Ascending aorta (tissue), 2 donors: ENCODE measurements at regions of chr6 and their contacts with region 1.

Region 1: GRCh38 chr6:84220809-84221409 is 6.5 kb downstream of the CEP162 start:
- DNase-seq: no peak
- H3K4me3 ChIP-seq: no peak overlapping the region
- H3K27ac ChIP-seq: no peak overlapping the region
- H3K4me1 ChIP-seq: no peaks in the 10 kb centered on the region
- H3K27me3 ChIP-seq: no peaks in the 10 kb centered on the region
- CTCF ChIP-seq: peak; percentile 19 to 65 (median 51)

Region 2: GRCh38 chr6:83615025-83615999 is 605.6 kb before region 1 on chr6:
- intact Hi-C with region 1: loop called (anchors 5 kb)
- DNase-seq: no peak
- H3K4me3 ChIP-seq: no peak overlapping the region
- H3K27ac ChIP-seq: no peak overlapping the region
- H3K4me1 ChIP-seq: no peaks in the 10 kb centered on the region
- H3K27me3 ChIP-seq: no peaks in the 10 kb centered on the region
- CTCF ChIP-seq: peak; percentile 3 to 59 (median 54)

Region 3: DNA sequence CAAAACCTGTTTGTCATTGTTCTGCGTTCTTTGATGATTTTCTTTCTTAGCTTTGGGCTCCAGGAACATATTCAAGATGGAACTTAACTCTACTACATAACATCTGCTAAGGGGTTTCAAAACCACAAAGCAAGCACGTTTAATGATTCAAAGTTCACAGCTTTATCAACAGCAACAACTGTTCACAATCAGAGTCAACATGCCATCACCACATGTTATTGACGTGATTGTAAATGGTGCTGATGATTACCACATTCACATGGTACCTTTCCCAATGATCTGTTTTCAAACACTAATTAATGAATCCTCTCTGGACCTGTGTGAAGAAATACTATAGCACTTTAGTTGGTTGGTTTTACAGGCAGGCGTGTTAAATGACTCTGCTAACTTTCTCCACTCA is 187.1 kb after region 1 on chr6:
- intact Hi-C with region 1: no loop called
- DNase-seq: no peak
- H3K4me3 ChIP-seq: no peak overlapping the region
- H3K27ac ChIP-seq: no peak overlapping the region
- H3K4me1 ChIP-seq: peaks cover 0 to 8% of the 10 kb centered on the region in 2 donors
- H3K27me3 ChIP-seq: no peaks in the 10 kb centered on the region
- CTCF ChIP-seq: no peak